ENCODE measurements at regions of chr11 and their contacts with region 1.

Region 1: DNA sequence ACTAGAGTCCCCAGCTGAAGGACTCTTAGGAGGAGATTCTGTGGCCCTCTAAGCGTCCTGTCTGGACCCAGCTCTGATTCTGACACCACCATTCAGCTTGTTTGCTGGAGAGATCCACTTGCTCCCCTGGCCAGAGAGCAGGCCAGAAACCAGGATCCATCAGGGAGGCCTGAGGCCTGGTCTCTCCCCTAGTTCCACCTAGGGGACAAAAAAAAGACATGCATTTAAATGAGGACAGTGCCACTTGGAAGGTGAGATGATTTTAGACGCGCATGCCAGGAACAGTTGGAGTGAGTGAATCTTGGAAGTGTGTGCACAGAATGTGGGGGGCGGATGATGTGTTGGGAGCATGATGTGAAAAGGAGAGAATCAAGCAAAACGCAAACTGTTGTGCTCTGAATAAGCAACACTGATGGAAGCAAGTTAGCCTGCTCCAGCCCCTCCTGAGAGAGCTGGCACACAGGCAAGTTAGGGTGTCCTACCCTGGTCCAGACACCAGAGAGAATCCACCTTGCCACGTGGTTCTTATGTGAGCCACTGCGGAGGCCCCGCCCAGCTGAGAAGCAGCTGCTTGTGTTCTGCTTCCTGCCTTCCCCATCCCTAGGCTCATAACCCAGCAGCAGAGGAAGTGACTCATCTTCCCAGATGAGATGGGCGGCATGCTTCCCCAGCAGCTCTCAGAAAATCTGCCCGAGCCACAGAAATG is 8.0 kb upstream of the SLCO2B1 start:
- DNase-seq: peak in 1 of 2 experiments; percentile 78
- H3K4me3 ChIP-seq: no peak overlapping the region
- H3K4me3 Mint-ChIP-seq: no peak overlapping the region
- H3K27ac Mint-ChIP-seq: no peak overlapping the region
- H3K4me1 ChIP-seq: peaks cover 45% of the 10 kb centered on the region
- H3K4me1 Mint-ChIP-seq: peaks cover 43% of the 10 kb centered on the region
- H3K27me3 ChIP-seq: no peaks in the 10 kb centered on the region
- H3K27me3 Mint-ChIP-seq: peaks cover 4% of the 10 kb centered on the region
- CTCF ChIP-seq: no peak

Region 2: GRCh38 chr11:75022759-75023396 is 120.0 kb before region 1 on chr11:
- CTCF ChIA-PET with region 1: interaction called, 32 read pairs
- POLR2A ChIA-PET with region 1: interaction called, 5 read pairs
- intact Hi-C with region 1: loop called (anchors 1 kb)
- DNase-seq: peak; percentile 89 to 93
- H3K4me3 ChIP-seq: no peak overlapping the region
- H3K4me3 Mint-ChIP-seq: no peak overlapping the region
- H3K27ac Mint-ChIP-seq: no peak overlapping the region
- H3K4me1 ChIP-seq: no peaks in the 10 kb centered on the region
- H3K4me1 Mint-ChIP-seq: no peaks in the 10 kb centered on the region
- H3K27me3 ChIP-seq: no peaks in the 10 kb centered on the region
- H3K27me3 Mint-ChIP-seq: no peaks in the 10 kb centered on the region
- CTCF ChIP-seq: peak; percentile 99 to 100

Region 3: DNA sequence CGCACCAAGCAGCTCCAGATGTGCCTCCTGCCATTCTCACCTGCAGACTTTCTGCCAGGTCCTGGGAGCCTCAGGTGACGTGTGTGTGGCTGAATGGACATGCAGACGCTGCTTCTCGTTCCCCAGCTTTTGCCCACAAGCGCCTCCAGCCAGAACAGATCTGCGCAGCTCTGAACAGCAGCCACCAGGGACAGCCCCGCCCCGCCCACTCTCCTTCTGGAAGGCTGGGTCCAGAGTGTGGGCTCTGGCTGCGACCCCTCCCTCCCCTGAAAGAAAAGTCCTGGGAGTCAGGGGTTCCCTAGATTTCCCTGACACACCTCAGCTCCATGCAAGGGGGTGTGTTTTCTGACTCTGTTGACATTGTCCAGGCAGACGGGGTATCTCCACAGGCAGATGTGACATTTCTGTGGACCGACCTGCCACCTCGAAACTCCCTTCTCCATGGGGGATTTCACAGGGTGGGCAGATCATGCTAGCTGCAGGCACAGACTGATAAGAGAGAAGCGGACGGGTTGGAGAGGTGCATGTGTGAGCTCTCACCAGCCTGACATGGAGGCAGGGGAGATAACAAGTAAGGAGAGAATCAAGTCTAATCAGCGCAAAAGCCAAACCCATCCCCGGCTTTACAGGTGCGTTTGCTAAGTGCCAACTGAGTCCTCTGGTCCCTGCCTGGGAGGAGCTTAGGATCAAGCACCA is 27.8 kb after region 1 on chr11:
- CTCF ChIA-PET with region 1: interaction called, 130 read pairs
- POLR2A ChIA-PET with region 1: interaction called, 18 read pairs
- intact Hi-C with region 1: loop called (anchors 1 kb)
- DNase-seq: peak in 1 of 2 experiments; percentile 50
- H3K4me3 ChIP-seq: no peak overlapping the region
- H3K4me3 Mint-ChIP-seq: no peak overlapping the region
- H3K27ac Mint-ChIP-seq: peak overlapping the region; percentile 94
- H3K4me1 ChIP-seq: peaks cover 60% of the 10 kb centered on the region
- H3K4me1 Mint-ChIP-seq: peaks cover 61% of the 10 kb centered on the region
- H3K27me3 ChIP-seq: no peaks in the 10 kb centered on the region
- H3K27me3 Mint-ChIP-seq: no peaks in the 10 kb centered on the region
- CTCF ChIP-seq: no peak

Region 4: GRCh38 chr11:75188671-75189070 is 45.8 kb after region 1 on chr11:
- CTCF ChIA-PET with region 1: interaction called, 13 read pairs
- POLR2A ChIA-PET with region 1: interaction called, 11 read pairs
- intact Hi-C with region 1: loop called (anchors 5 kb)
- DNase-seq: no peak
- H3K4me3 ChIP-seq: no peak overlapping the region
- H3K4me3 Mint-ChIP-seq: no peak overlapping the region
- H3K27ac Mint-ChIP-seq: no peak overlapping the region
- H3K4me1 ChIP-seq: peaks cover 22% of the 10 kb centered on the region; the same call in 1 of the 2 replicates
- H3K4me1 Mint-ChIP-seq: peaks cover 29% of the 10 kb centered on the region
- H3K27me3 ChIP-seq: no peaks in the 10 kb centered on the region
- H3K27me3 Mint-ChIP-seq: no peaks in the 10 kb centered on the region
- CTCF ChIP-seq: no peak

Region 5: DNA sequence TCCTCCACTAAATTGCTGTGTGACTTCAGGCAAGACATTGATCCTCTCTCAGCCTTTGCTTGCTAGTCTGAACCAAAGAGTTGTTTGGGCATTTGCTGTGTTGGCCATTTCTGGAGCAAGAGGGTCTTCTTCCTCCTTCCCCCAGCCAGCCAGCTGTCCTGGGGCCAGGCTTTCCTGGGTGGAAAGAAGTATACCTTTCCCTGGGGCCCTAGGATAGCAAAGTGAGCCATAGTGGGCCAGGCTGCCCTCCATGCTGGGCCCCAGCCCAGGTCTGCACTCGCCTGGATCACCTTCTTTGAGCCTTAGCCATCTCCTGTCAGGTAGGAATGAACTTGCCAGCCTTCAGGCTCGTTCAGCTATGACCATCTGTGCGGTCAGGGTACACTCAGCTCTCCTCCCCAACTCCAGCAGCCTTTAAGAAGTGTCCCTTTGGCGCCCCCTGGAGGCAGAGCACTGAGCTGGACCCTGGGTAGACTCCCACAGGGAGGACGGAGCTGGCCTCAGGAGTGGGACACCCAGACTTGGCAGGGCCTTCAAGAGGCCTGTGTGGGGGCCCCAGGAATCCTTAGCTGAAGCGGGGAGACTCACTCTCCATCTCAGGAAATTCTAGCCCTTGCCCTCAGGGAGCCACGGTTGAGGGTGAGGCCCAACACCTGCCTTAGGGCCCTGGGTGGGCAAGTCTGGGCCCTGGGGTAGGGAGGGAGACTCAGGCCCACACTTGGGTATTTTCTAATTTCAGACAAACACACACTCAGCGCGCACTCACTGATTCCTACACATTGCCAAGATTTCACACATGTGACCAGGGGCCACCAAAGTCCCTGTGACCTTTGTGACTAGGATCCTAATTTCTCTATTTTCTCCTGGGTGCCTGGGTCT is 62.1 kb after region 1 on chr11:
- CTCF ChIA-PET with region 1: interaction called, 887 read pairs
- POLR2A ChIA-PET with region 1: interaction called, 6 read pairs
- intact Hi-C with region 1: loop called (anchors 1 kb)
- DNase-seq: peak; percentile 95 to 97
- H3K4me3 ChIP-seq: no peak overlapping the region
- H3K4me3 Mint-ChIP-seq: no peak overlapping the region
- H3K27ac Mint-ChIP-seq: no peak overlapping the region
- H3K4me1 ChIP-seq: peaks cover 26% of the 10 kb centered on the region
- H3K4me1 Mint-ChIP-seq: peaks cover 16% of the 10 kb centered on the region
- H3K27me3 ChIP-seq: no peaks in the 10 kb centered on the region
- H3K27me3 Mint-ChIP-seq: no peaks in the 10 kb centered on the region
- CTCF ChIP-seq: peak; percentile 98 to 99

Region 6: GRCh38 chr11:75223954-75224643 is 81.2 kb after region 1 on chr11:
- CTCF ChIA-PET with region 1: interaction called, 71 read pairs
- POLR2A ChIA-PET with region 1: no interaction called
- intact Hi-C with region 1: no loop called
- DNase-seq: peak in 1 of 2 experiments; percentile 55
- H3K4me3 ChIP-seq: no peak overlapping the region
- H3K4me3 Mint-ChIP-seq: no peak overlapping the region
- H3K27ac Mint-ChIP-seq: no peak overlapping the region
- H3K4me1 ChIP-seq: no peaks in the 10 kb centered on the region
- H3K4me1 Mint-ChIP-seq: no peaks in the 10 kb centered on the region
- H3K27me3 ChIP-seq: no peaks in the 10 kb centered on the region
- H3K27me3 Mint-ChIP-seq: no peaks in the 10 kb centered on the region
- CTCF ChIP-seq: peak; percentile 30 to 54

Region 7: GRCh38 chr11:75248690-75249268 is 105.9 kb after region 1 on chr11:
- CTCF ChIA-PET with region 1: interaction called, 437 read pairs
- POLR2A ChIA-PET with region 1: no interaction called
- intact Hi-C with region 1: loop called (anchors 1 kb)
- DNase-seq: peak; percentile 93 to 95
- H3K4me3 ChIP-seq: no peak overlapping the region
- H3K4me3 Mint-ChIP-seq: no peak overlapping the region
- H3K27ac Mint-ChIP-seq: no peak overlapping the region
- H3K4me1 ChIP-seq: no peaks in the 10 kb centered on the region
- H3K4me1 Mint-ChIP-seq: no peaks in the 10 kb centered on the region
- H3K27me3 ChIP-seq: no peaks in the 10 kb centered on the region
- H3K27me3 Mint-ChIP-seq: peaks cover 9% of the 10 kb centered on the region
- CTCF ChIP-seq: peak; percentile 100

Region 8: DNA sequence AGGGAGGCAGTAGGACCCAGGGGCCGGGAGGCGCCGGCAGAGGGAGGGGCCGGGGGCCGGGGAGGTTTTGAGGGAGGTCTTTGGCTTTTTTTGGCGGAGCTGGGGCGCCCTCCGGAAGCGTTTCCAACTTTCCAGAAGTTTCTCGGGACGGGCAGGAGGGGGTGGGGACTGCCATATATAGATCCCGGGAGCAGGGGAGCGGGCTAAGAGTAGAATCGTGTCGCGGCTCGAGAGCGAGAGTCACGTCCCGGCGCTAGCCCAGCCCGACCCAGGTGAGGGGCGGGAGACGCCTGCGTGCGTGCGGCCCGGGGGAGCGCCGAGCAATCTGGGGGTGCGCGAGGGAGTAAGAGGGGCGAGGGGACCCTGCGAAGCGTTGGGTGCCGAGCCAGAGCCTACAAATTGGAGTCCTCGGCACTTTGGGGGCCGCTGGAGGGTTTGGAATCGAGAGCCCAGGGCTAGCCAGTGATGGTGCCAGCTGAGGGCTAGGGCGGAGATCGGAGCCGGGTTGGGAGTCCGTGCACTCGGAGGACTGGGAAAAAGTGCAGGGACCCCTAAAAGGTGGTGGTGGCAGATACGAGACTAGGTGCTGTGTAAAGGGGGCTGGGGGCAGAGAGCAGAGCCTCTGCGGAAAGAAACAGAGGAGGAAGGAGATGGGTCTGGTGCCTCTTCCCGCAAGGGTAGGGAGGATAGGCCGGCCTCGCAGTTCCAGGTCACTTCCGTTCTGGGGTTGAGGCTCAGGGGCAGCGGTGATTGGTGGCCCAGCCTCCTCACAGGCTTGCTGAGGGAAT is 419.4 kb after region 1 on chr11 and contains the start of gene SERPINH1:
- CTCF ChIA-PET with region 1: no interaction called
- POLR2A ChIA-PET with region 1: no interaction called
- intact Hi-C with region 1: no loop called
- DNase-seq: peak; percentile 92
- H3K4me3 ChIP-seq: peak within 1 kb of the TSS; percentile 51
- H3K4me3 Mint-ChIP-seq: peak within 1 kb of the TSS; percentile 93
- H3K27ac Mint-ChIP-seq: peak within 1 kb of the TSS; percentile 95
- H3K4me1 ChIP-seq: peaks cover 71% of the 10 kb centered on the region
- H3K4me1 Mint-ChIP-seq: peaks cover 44% of the 10 kb centered on the region
- H3K27me3 ChIP-seq: no peaks in the 10 kb centered on the region
- H3K27me3 Mint-ChIP-seq: no peaks in the 10 kb centered on the region
- CTCF ChIP-seq: no peak
- total RNA-seq, gene SERPINH1: 481 and 528 TPM in 2 replicates

Region 9: DNA sequence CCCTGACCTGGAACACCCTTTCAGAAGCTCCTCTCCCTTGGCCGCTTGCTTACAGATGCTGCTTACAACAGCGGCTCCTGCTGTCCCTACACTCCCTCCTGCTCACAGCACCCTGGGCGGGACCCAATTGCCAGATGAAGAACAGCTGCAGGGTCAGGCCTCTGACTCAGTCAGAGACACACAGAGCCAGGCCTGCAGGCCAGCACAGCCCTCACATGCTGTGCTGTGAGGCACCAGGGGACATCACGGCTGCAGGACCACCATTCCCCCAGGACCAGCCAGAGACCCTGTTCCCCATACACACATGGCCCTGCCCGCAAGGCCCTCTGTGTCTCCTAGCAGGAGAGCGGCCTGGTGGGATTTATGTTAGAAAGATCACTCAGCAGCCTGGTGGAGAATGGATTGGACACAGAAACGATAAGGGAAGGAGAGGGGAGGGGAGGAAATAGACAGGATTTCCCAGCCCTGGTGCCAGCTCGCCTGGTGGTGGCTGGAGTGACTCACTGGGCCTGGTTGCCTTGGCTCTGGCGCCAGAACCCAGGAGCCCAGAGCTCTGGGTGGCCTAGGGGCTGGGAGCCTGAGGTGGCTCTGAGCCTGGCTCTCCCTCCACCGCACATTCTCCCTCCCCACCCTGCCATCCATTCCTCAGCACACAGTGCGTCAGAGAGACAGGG is 1930.6 kb after region 1 on chr11:
- CTCF ChIA-PET with region 1: no interaction called
- POLR2A ChIA-PET with region 1: no interaction called
- intact Hi-C with region 1: no loop called
- DNase-seq: peak; percentile 37 to 57
- H3K4me3 ChIP-seq: no peak overlapping the region
- H3K4me3 Mint-ChIP-seq: no peak overlapping the region
- H3K27ac Mint-ChIP-seq: no peak overlapping the region
- H3K4me1 ChIP-seq: peaks cover 10% of the 10 kb centered on the region
- H3K4me1 Mint-ChIP-seq: peaks cover 21% of the 10 kb centered on the region
- H3K27me3 ChIP-seq: no peaks in the 10 kb centered on the region
- H3K27me3 Mint-ChIP-seq: no peaks in the 10 kb centered on the region
- CTCF ChIP-seq: peak in 1 of 2 experiments; percentile 5